PC-3 (cell line): ENCODE measurements at regions of chr1 and their contacts with region 1.

Region 1: DNA sequence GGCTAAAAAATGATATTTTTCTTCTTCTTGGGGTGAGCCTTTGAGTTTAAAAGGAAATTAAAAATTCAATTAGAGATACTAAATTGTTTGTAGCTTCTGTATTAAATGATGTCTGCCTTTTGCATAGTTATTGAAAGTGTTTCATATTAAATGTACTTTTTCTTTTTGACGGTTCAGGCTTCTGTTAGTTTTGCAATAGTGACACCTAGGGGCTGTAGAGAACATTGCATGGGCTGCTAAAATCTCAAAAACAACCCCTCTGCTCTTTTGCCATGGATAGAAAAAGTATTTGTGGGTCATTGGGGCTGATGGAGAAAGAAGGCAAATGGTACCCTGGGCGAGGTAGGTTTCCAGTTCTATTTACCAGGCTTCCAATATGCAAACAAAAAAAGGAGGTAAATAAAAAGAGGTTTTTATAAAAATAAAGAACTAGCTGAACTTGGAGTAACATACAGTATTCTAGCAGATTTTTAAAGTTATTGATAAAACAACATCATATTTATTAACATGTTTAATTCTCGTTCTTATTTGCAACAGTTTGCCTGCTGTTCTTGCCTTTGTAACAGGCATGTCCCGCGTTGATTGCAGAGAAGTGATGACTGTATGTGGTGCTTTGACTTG is 115.4 kb upstream of the HOOK1 start:
- DNase-seq: peak; percentile 65
- ATAC-seq: peak; percentile 49
- H3K4me3 ChIP-seq: no peak overlapping the region
- H3K27ac ChIP-seq: no peak overlapping the region
- H3K4me1 ChIP-seq: no peaks in the 10 kb centered on the region
- H3K27me3 ChIP-seq: no peaks in the 10 kb centered on the region
- CTCF ChIP-seq: peak; percentile 94

Region 2: GRCh38 chr1:58739856-58740466 is 959.4 kb before region 1 on chr1:
- CTCF ChIA-PET with region 1: no interaction called
- POLR2A ChIA-PET with region 1: no interaction called
- intact Hi-C with region 1: loop called (anchors 1 kb)
- DNase-seq: peak; percentile 89
- ATAC-seq: peak; percentile 77
- H3K4me3 ChIP-seq: no peak overlapping the region
- H3K27ac ChIP-seq: no peak overlapping the region
- H3K4me1 ChIP-seq: no peaks in the 10 kb centered on the region
- H3K27me3 ChIP-seq: no peaks in the 10 kb centered on the region
- CTCF ChIP-seq: peak; percentile 95

Region 3: DNA sequence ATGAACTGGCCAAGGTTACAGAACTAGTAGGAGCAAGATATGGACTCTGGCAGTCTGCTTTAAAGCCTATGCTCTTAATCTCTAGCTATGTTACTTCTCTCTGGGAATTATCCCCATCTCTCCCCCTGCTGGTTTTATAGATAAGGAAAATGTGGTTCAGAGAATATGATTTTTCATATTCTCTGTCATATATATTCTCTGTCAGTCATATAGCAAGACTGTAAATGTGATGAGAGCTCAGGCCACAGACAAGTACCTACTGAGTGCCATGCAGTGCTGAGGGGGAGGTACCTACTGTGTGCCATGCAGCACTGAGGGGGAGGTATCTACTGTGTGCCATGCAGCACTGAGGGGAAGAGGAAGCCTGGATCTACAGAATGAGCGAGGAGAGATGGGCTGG is 622.7 kb before region 1 on chr1:
- CTCF ChIA-PET with region 1: no interaction called
- POLR2A ChIA-PET with region 1: no interaction called
- intact Hi-C with region 1: loop called (anchors 5 kb)
- DNase-seq: peak; percentile 33
- ATAC-seq: peak; percentile 74
- H3K4me3 ChIP-seq: no peak overlapping the region
- H3K27ac ChIP-seq: no peak overlapping the region
- H3K4me1 ChIP-seq: no peaks in the 10 kb centered on the region
- H3K27me3 ChIP-seq: no peaks in the 10 kb centered on the region
- CTCF ChIP-seq: peak; percentile 53

Region 4: GRCh38 chr1:59296358-59297256 is 402.7 kb before region 1 on chr1 and contains the start of gene FGGY:
- CTCF ChIA-PET with region 1: no interaction called
- POLR2A ChIA-PET with region 1: no interaction called
- intact Hi-C with region 1: loop called (anchors 1 kb)
- DNase-seq: peak; percentile 97
- ATAC-seq: peak; percentile 90
- H3K4me3 ChIP-seq: peak within 1 kb of the TSS; percentile 88
- H3K27ac ChIP-seq: peak within 1 kb of the TSS; percentile 76
- H3K4me1 ChIP-seq: peaks cover 30% of the 10 kb centered on the region
- H3K27me3 ChIP-seq: no peaks in the 10 kb centered on the region
- CTCF ChIP-seq: no peak
- total RNA-seq, gene FGGY: 7.4 and 10.1 TPM in 2 replicates

Region 5: DNA sequence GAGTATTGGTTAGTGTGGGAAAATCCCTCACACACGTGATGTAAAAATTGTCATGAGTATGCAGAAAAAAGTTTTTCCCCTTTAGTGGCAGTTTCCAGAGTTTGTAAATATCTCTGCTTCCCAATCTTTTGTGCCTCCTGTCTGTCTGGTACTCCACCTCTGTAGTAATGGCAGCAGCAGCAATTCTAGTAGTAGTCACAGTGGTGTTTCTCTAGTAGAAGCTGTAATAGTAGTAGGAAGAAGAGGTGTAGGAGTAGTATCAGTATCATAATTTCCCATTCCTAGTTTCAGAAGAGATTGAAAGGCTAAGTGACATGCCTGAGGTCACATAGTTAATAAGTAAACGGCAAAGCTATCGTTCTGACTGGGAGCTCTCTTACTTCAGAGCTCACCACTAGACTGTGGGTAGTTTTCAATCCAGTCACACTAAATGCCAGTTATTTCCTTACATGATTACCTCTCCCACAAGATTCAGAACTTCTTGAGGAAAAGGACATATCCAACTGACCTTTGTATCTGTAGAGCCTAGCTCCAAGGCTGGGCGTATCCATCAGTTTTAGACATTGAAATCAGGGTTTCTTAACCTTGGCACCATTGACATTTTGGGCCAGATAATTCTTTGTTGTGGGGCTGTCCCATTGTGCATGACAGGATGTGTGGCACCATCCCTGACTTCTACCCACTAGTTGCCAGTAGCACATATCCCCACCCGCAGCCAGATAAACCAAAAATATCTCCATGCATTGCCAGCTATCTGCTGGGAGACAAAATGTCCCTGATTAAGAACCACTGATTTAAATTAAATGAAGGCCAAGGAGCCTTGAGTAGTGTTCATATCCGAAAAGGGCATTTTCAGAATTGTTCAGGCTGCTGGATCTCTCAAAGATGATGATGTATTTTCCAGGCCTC is 266.6 kb before region 1 on chr1:
- CTCF ChIA-PET with region 1: no interaction called
- POLR2A ChIA-PET with region 1: no interaction called
- intact Hi-C with region 1: loop called (anchors 2 kb)
- DNase-seq: no peak
- ATAC-seq: no peak
- H3K4me3 ChIP-seq: no peak overlapping the region
- H3K27ac ChIP-seq: peak overlapping the region; percentile 84
- H3K4me1 ChIP-seq: peaks cover 54% of the 10 kb centered on the region
- H3K27me3 ChIP-seq: no peaks in the 10 kb centered on the region
- CTCF ChIP-seq: no peak

Region 6: DNA sequence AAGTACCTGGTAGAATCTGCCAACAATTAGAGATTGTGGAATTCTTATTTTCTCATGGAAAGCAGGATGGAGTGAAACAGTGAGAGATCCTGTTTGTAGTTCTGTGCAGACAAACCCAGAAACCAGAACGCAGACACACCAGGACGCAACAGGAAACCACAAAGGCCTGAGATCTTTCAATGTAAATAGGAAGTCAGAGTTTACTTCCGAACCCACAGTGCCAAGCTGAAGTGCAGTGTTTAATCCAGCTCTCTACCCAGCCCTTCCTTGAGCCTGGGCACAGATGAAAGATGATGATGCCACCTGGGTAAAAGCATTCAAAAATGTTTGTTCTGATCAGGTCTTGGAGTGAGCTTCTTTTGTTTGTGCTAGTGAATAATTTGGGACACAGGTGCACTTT is 128.8 kb before region 1 on chr1:
- CTCF ChIA-PET with region 1: no interaction called
- POLR2A ChIA-PET with region 1: no interaction called
- intact Hi-C with region 1: loop called (anchors 1 kb)
- DNase-seq: peak; percentile 60
- ATAC-seq: peak; percentile 92
- H3K4me3 ChIP-seq: no peak overlapping the region
- H3K27ac ChIP-seq: peak overlapping the region; percentile 54
- H3K4me1 ChIP-seq: peaks cover 16% of the 10 kb centered on the region
- H3K27me3 ChIP-seq: no peaks in the 10 kb centered on the region
- CTCF ChIP-seq: no peak

Region 7: DNA sequence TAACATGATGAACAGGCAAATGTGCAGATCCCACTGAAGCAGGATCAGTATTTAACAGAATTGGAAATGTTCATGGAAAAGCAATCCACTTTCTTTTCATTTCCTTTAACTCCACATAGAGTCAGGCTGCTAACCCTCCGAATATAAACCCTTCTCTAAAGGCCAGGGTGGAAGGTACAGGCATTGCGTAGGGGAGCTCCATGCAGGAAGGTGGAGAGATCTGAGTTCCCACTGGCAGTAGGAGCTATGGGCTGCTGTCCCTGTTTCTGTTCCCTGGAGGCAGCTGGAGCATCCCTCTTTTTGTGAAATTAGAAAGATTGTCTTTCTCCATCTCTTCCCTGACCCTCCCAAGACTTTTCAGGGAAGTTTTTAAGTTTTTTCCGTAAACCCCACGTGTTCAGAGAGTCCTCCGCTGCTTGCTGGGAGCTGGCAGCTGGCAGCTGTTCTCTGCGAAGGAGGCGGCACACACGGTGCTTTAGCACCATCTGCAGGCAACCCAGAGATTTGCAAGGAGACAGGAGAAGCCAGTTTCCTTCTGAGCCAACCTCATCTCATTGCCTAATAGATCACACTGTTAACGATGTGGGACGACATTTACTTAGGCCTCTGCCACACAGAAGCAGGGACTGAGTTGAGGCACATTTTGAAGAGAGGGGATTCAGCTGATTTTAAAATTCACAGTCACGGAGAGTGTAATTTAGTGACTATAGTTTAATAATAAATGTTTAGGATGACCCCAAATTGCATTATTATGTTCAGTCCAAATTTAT is 60.0 kb after region 1 on chr1:
- CTCF ChIA-PET with region 1: interaction called, 7 read pairs
- POLR2A ChIA-PET with region 1: no interaction called
- intact Hi-C with region 1: loop called (anchors 2 kb)
- DNase-seq: peak; percentile 82
- ATAC-seq: peak; percentile 95
- H3K4me3 ChIP-seq: peak overlapping the region; percentile 45; the same call in 1 of the 2 replicates
- H3K27ac ChIP-seq: no peak overlapping the region
- H3K4me1 ChIP-seq: 0 out of 2 replicates have a peak, but pooled peaks cover 5% of the 10 kb centered on the region
- H3K27me3 ChIP-seq: no peaks in the 10 kb centered on the region
- CTCF ChIP-seq: peak; percentile 95